Endothelial cell of umbilical vein (primary cell): ENCODE measurements at regions of chr22 and their contacts with region 1.

Region 1: GRCh38 chr22:24938741-24939341 is 7.7 kb downstream of the LHFPL7 start:
- DNase-seq: peak; percentile 43
- H3K4me3 ChIP-seq: no peak overlapping the region
- H3K27ac ChIP-seq: no peak overlapping the region
- H3K4me1 ChIP-seq: no peaks in the 10 kb centered on the region
- H3K27me3 ChIP-seq: peaks cover 14% of the 10 kb centered on the region in 2 experiments
- CTCF ChIP-seq: peak; percentile 61 to 67
- POLR2A ChIP-seq: no peak

Region 2: GRCh38 chr22:25048659-25049647 is 110.1 kb after region 1 on chr22:
- CTCF ChIA-PET with region 1: interaction called, 378 read pairs
- POLR2A ChIA-PET with region 1: no interaction called
- dilution Hi-C with region 1: no loop called
- intact Hi-C with region 1: loop called (anchors 1 kb)
- DNase-seq: peak; percentile 63
- H3K4me3 ChIP-seq: no peak overlapping the region
- H3K27ac ChIP-seq: no peak overlapping the region
- H3K4me1 ChIP-seq: peaks cover 4% of the 10 kb centered on the region
- H3K27me3 ChIP-seq: no peaks in the 10 kb centered on the region
- CTCF ChIP-seq: peak; percentile 82 to 88
- POLR2A ChIP-seq: no peak

Region 3: DNA sequence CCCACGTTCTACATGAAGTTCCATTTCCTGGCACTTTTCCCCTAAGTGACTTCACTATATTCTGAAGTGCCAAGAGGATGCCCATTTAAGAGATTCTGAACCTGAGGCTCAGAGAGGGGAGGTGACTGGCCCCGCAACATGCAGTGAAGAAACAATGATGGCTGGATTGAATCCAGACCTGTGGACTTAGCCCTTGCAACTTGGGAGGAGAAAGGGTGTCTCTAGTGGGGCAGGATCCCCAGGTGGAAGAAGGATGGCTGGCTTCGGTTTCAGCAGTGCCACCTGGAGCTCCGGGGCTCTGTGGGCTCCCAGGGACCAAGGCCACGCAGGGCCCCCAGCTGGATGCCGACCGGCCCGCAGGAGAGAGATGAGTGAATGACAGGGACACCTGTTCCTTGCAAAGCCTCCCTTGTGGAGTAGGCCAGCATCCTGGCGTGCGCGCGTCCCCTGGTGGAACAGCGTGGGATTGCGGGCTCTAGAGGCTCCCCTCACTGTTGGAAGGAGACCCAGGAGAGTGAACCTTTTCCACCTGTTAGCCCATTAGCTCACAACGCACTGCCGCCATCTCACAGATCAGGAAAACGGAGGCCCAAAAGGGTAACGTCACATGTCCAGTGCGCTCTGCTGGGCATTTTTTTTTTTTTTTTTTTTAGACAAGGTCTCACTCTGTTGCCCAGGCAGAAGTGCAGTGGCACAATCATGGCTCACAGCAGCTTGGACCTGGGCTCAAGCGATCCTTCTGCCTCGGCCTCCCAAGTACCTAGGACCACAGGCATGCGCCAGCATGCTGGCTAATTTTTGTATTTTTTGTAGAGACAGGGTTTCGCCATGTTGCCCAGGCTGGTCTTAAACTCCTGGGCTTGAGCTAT is 118.4 kb after region 1 on chr22:
- CTCF ChIA-PET with region 1: interaction called, 378 read pairs
- POLR2A ChIA-PET with region 1: no interaction called
- dilution Hi-C with region 1: no loop called
- intact Hi-C with region 1: loop called (anchors 1 kb)
- DNase-seq: peak; percentile 63
- H3K4me3 ChIP-seq: no peak overlapping the region
- H3K27ac ChIP-seq: no peak overlapping the region
- H3K4me1 ChIP-seq: peaks cover 19% of the 10 kb centered on the region
- H3K27me3 ChIP-seq: no peaks in the 10 kb centered on the region
- CTCF ChIP-seq: peak; percentile 86 to 99
- POLR2A ChIP-seq: no peak

Region 4: GRCh38 chr22:25334162-25334490 is 395.3 kb after region 1 on chr22:
- CTCF ChIA-PET with region 1: interaction called, 3 read pairs
- POLR2A ChIA-PET with region 1: no interaction called
- dilution Hi-C with region 1: no loop called
- intact Hi-C with region 1: loop called (anchors 10 kb)
- DNase-seq: peak; percentile 44
- H3K4me3 ChIP-seq: no peak overlapping the region
- H3K27ac ChIP-seq: no peak overlapping the region
- H3K4me1 ChIP-seq: no peaks in the 10 kb centered on the region
- H3K27me3 ChIP-seq: peaks cover 0 to 2% of the 10 kb centered on the region in 2 experiments
- CTCF ChIP-seq: peak; percentile 68 to 75
- POLR2A ChIP-seq: no peak